Mammary epithelial cell (primary cell): ENCODE measurements at regions of chr9 and their contacts with region 1.

Region 1: DNA sequence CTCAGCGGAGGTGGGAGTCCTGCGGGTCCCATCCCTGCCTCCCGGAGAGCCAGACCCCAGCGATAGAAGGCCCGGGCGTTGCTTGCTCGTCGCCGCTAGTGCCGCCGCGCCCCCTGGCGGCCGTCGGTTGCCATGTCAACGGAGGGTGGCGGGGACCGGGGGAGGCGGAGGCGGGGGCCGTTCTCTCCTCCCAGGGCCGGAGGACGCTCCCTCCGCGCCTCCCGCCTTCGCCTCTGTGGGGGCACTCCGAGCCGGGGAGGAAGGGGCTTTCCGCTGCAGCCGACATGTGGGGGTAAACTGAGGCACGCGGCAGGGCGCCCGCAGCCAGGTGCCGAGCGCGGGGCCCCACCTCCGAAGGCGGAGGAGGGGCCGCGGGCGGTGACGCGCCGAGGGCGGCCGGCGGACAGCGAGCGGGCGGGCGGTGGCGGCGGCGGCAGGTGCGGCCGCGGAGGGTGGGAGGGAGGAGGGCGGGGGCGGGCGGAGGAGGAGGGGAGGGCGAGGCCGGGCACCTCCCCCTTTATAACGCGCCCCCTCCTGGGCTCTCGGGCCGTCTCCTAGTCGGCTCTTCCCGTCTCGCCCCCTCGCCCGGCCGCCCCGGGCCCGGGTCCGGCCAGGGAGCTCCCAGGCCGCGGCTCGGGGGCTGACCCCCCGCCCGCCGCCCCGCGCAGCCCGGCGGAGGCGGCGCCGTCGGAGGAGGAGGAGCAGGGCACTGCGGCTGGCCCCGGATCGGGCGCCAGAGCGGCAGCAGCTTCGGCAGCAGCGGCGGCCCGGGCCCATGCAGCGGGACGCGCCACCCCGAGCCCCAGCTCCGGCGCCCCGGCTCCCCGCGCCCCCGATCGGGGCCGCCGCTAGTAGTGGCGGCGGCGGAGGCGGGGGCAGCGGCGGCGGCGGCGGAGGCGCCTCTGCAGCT is 556 bp upstream of the CDK9 start:
- DNase-seq: peak; percentile 74
- H3K4me3 ChIP-seq: peak overlapping the region; percentile 47 to 94 (median 70)
- H3K27ac ChIP-seq: peak overlapping the region; percentile 43
- H3K4me1 ChIP-seq: peaks cover 18% of the 10 kb centered on the region
- H3K27me3 ChIP-seq: no peaks in the 10 kb centered on the region
- CTCF ChIP-seq: peak; percentile 35 to 84

Region 2: DNA sequence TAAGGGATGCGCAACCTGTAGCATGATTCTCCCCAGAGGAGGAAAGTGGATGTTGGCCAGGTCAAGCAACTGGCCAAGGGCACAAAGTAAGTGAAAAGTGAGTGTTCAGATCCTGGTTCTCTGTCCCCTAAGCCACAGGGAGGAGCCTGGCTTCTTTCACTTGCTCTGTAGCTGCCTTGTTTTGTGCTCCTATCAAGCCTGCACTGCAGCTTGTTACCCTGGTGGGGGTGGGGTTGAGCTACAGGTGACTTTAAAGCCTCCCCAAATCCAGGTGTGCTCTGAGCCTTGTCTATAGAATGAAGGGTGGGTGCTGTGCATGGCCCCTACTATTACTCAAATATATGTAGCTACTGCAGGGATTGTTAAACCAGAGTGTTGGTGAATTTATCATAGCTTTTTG is 837.7 kb before region 1 on chr9:
- CTCF ChIA-PET with region 1: no interaction called
- dilution Hi-C with region 1: no loop called
- in situ Hi-C with region 1: no loop called
- intact Hi-C with region 1: no loop called
- DNase-seq: no peak
- H3K4me3 ChIP-seq: no peak overlapping the region
- H3K27ac ChIP-seq: no peak overlapping the region
- H3K4me1 ChIP-seq: no peaks in the 10 kb centered on the region
- H3K27me3 ChIP-seq: peaks cover 1% of the 10 kb centered on the region
- CTCF ChIP-seq: peak; percentile 12 to 39

Region 3: DNA sequence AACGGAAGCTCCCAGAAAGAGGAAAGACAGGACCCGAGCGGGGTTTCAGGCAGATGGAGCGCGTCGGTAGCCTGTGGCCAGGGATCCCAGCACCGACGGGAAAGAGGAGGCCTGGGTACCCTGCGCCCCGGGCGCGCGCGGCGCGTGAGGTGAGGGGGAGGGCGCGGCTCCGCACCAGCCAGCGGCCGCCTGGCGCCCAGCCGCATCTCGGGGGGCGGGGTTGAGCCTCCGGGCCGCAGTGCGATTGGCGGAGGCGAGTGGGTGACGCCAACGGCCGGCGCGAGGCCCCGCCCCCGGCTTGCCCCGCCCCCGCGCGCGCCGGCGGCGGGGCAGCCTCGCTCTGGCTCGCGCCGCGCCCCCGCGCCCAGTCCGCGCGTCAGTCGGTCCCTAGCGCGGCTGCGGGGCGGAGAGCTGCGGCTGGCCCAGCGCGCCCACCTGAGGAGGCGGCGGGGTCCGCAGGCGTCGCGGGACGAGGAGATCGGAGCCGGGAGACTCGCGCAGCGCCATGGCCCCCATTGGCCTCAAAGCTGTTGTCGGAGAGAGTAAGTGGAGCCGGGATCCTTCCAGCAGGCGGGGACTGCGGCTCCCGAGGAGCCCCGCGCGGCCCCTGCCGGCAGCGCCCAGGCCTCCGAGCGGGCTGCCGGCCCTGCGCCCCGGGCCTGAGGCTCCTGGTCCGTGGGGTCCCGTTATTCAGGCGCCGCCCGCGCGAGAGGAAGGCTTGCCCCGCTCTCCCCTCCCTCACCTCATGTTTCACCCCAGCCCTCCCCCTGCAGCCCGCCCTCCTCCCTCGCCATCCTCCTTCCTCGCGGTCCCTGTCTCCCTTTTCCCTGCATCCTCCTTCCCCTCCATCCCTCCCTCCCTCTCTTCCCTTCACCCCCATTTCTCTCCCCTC is 173.1 kb before region 1 on chr9 and contains the start of gene STXBP1:
- CTCF ChIA-PET with region 1: no interaction called
- dilution Hi-C with region 1: no loop called
- in situ Hi-C with region 1: no loop called
- intact Hi-C with region 1: loop called (anchors 5 kb)
- DNase-seq: peak; percentile 79
- H3K4me3 ChIP-seq: peak within 1 kb of the TSS; percentile 81 to 92 (median 88)
- H3K27ac ChIP-seq: peak within 1 kb of the TSS; percentile 67
- H3K4me1 ChIP-seq: peaks cover 29% of the 10 kb centered on the region
- H3K27me3 ChIP-seq: no peaks in the 10 kb centered on the region
- CTCF ChIP-seq: no peak
- total RNA-seq, gene STXBP1: 32.5 to 72.5 TPM

Region 4: GRCh38 chr9:127741831-127742434 is 43.3 kb before region 1 on chr9:
- CTCF ChIA-PET with region 1: interaction called, 11 read pairs
- dilution Hi-C with region 1: no loop called
- in situ Hi-C with region 1: loop called (anchors 5 kb)
- intact Hi-C with region 1: loop called (anchors 1 kb)
- DNase-seq: no peak
- H3K4me3 ChIP-seq: no peak overlapping the region
- H3K27ac ChIP-seq: no peak overlapping the region
- H3K4me1 ChIP-seq: peaks cover 21% of the 10 kb centered on the region
- H3K27me3 ChIP-seq: no peaks in the 10 kb centered on the region
- CTCF ChIP-seq: no peak

Region 5: DNA sequence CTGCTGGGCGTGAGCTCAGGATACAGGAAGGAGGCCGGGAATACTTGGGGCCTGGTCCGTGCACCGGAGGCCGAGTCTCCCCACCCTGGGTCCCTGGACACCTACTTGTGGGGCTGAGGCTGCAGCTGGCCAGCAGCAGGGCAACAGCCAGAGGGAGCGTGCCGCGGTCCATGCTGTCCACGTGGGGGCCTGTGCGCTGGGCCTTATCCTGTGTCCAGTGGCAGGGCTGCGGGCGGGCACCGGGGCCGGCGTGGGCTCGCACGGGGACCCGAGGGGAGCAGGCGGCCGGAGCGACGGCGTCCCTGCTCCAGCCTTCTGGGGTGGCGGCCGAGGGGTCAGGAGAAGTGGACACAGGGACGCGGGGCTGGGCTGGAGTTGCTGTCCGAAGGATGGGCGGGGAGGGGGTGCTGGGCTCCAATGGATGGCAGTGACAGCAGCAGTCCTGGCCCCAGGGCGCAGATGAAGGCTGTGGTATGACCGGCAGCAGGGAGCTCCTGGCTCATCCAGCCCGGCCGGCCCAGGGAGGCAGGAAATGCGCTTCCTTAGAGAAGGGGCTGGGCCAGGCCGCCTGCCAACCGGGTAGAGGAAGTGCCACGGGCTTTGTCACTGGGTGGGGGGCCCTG is 69.0 kb after region 1 on chr9 and contains the start of gene ENG:
- CTCF ChIA-PET with region 1: no interaction called
- dilution Hi-C with region 1: no loop called
- in situ Hi-C with region 1: no loop called
- intact Hi-C with region 1: loop called (anchors 5 kb)
- DNase-seq: peak; percentile 38
- H3K4me3 ChIP-seq: peak within 1 kb of the TSS; percentile 46 to 85 (median 69)
- H3K27ac ChIP-seq: peak within 1 kb of the TSS; percentile 51
- H3K4me1 ChIP-seq: peaks cover 7% of the 10 kb centered on the region
- H3K27me3 ChIP-seq: no peaks in the 10 kb centered on the region
- CTCF ChIP-seq: peak in 1 of 2 donors; percentile 23
- total RNA-seq, gene ENG: 4.0 to 32.2 TPM

Region 6: GRCh38 chr9:128034821-128035764 is 249.8 kb after region 1 on chr9:
- CTCF ChIA-PET with region 1: no interaction called
- dilution Hi-C with region 1: no loop called
- in situ Hi-C with region 1: no loop called
- intact Hi-C with region 1: loop called (anchors 2 kb)
- DNase-seq: peak; percentile 80
- H3K4me3 ChIP-seq: no peak overlapping the region
- H3K27ac ChIP-seq: no peak overlapping the region
- H3K4me1 ChIP-seq: no peaks in the 10 kb centered on the region
- H3K27me3 ChIP-seq: no peaks in the 10 kb centered on the region
- CTCF ChIP-seq: peak; percentile 73 to 82